Common myeloid progenitor, CD34-positive (primary cell): ENCODE measurements at regions of chr2 and their contacts with region 1.

Region 1: GRCh38 chr2:44981136-44982108 is 27.8 kb downstream of the SIX2 start:
- DNase-seq: peak; percentile 63 to 84 (median 76)
- H3K4me3 ChIP-seq: no peak overlapping the region
- H3K27ac ChIP-seq: no peak overlapping the region
- H3K4me1 ChIP-seq: no peaks in the 10 kb centered on the region
- H3K27me3 ChIP-seq: peaks cover 0 to 2% (median 0%) of the 10 kb centered on the region in 5 experiments

Region 2: GRCh38 chr2:43524177-43524965 is 1457.1 kb before region 1 on chr2:
- CTCF ChIA-PET with region 1: no interaction called
- POLR2A ChIA-PET with region 1: no interaction called
- DNase-seq: no peak
- H3K4me3 ChIP-seq: no peak overlapping the region
- H3K27ac ChIP-seq: no peak overlapping the region
- H3K4me1 ChIP-seq: peaks cover 4 to 12% (median 9%) of the 10 kb centered on the region in 4 experiments
- H3K27me3 ChIP-seq: no peaks in the 10 kb centered on the region

Region 3: GRCh38 chr2:45494269-45494977 is 513.0 kb after region 1 on chr2:
- CTCF ChIA-PET with region 1: interaction called, 98 read pairs
- POLR2A ChIA-PET with region 1: interaction called, 3 read pairs
- DNase-seq: peak; percentile 72 to 85 (median 85)
- H3K4me3 ChIP-seq: no peak overlapping the region
- H3K27ac ChIP-seq: no peak overlapping the region
- H3K4me1 ChIP-seq: peaks cover 2 to 15% (median 8%) of the 10 kb centered on the region in 4 experiments
- H3K27me3 ChIP-seq: no peaks in the 10 kb centered on the region